PC-3 (cell line): ENCODE measurements at regions of chr1 and their contacts with region 1.

Region 1: GRCh38 chr1:19390901-19391595 is 78.9 kb downstream of the SLC66A1 start:
- DNase-seq: peak; percentile 55
- ATAC-seq: peak; percentile 46; the same call in 1 of the 2 replicates
- H3K4me3 ChIP-seq: no peak overlapping the region
- H3K27ac ChIP-seq: no peak overlapping the region
- H3K4me1 ChIP-seq: peaks cover 4% of the 10 kb centered on the region; the same call in 1 of the 2 replicates
- H3K27me3 ChIP-seq: no peaks in the 10 kb centered on the region
- CTCF ChIP-seq: peak; percentile 91

Region 2: GRCh38 chr1:19361611-19362147 is 29.4 kb before region 1 on chr1:
- CTCF ChIA-PET with region 1: no interaction called
- POLR2A ChIA-PET with region 1: no interaction called
- intact Hi-C with region 1: no loop called
- DNase-seq: peak; percentile 77
- ATAC-seq: peak; percentile 94
- H3K4me3 ChIP-seq: no peak overlapping the region
- H3K27ac ChIP-seq: peak overlapping the region; percentile 18; the same call in 1 of the 2 replicates
- H3K4me1 ChIP-seq: peaks cover 20% of the 10 kb centered on the region
- H3K27me3 ChIP-seq: no peaks in the 10 kb centered on the region
- CTCF ChIP-seq: no peak

Region 3: DNA sequence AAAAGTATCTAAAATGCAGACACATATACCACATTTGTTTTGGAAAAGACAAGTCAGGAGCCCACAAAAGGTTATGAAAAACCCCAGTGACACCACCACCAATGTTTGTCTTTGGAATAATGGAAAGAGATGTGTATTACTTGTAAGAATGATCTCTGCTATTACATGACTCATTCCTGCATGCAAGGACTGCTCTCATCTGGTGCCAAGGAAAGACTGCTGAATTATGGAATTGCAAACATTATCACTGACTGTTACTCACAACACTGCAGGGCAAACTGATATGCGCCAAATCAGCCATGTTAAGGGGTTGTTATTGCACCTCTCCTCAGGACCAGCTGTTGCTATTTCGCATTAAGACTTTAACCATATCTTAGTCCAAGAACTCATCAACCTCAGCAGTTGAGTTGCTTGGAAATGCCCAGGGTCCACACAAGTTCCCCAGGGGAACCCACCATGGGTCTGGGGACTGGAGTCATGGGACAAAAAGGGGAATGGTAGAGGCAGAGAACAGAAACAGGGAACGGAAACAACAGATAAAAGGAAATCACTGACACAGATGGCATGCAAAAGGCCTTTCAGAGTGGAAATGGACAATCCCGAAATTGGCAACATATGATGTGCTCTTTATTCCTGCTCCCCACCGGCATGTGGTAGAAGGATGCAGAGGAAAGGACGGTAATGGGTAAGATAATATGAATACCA is 59.9 kb after region 1 on chr1:
- CTCF ChIA-PET with region 1: no interaction called
- POLR2A ChIA-PET with region 1: no interaction called
- intact Hi-C with region 1: loop called (anchors 10 kb)
- DNase-seq: peak; percentile 94
- ATAC-seq: peak; percentile 89
- H3K4me3 ChIP-seq: peak overlapping the region; percentile 28; the same call in 1 of the 2 replicates
- H3K27ac ChIP-seq: peak overlapping the region; percentile 74
- H3K4me1 ChIP-seq: peaks cover 49% of the 10 kb centered on the region
- H3K27me3 ChIP-seq: no peaks in the 10 kb centered on the region
- CTCF ChIP-seq: no peak

Region 4: DNA sequence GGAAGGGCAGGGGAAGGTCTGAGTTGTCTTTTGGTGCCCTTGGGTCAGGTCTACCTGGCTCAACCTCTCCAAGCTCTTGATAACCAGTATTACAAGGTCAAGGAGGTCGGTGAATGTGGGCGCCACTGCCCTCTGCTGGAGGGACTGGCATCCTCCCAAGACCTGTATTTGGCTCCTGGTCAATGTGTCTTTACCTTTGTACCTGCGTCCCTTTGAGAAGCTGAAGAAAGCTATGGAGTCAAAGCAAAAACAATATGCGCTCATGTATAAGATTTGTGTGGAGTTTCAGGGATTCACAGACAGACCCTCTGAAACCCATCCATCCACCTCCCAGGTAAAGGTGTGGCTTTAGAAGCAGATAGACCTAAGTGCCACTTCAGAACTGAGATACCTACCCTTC is 191.3 kb after region 1 on chr1:
- CTCF ChIA-PET with region 1: no interaction called
- POLR2A ChIA-PET with region 1: no interaction called
- intact Hi-C with region 1: loop called (anchors 10 kb)
- DNase-seq: peak; percentile 60
- ATAC-seq: no peak; the same call in 1 of the 2 replicates
- H3K4me3 ChIP-seq: no peak overlapping the region
- H3K27ac ChIP-seq: no peak overlapping the region
- H3K4me1 ChIP-seq: no peaks in the 10 kb centered on the region
- H3K27me3 ChIP-seq: no peaks in the 10 kb centered on the region
- CTCF ChIP-seq: peak; percentile 82

Region 5: DNA sequence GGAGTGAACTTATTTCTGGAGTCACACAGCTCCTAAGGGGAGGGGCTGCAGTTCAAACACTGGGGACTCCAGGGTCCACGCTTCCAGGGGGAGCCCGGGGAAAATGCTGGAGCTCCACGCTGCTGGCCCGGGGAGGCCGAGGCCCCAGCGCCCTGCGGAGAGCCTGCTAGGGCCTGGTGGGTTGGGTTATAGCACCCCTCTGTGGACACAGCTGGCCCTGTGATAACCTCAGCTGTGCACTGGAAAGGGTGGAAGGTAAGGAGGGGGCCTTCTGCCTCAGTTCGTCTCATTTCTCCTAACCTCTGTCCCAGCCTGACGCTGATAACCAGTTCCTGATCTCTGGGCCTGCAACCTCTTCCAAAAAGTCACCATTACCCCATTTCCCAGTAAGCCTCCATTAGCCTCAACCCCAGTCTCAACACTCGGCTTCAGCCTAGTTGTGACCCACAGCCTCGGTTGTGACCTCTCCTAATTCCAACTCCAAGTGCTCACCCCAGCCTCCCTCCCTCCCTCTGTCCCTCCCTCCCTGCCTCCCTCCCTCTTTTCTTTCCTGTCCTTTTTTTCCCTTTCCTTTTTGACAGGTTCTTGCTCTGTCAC is 260.2 kb after region 1 on chr1:
- CTCF ChIA-PET with region 1: interaction called, 6 read pairs
- POLR2A ChIA-PET with region 1: no interaction called
- intact Hi-C with region 1: loop called (anchors 1 kb)
- DNase-seq: peak; percentile 16
- ATAC-seq: peak; percentile 52
- H3K4me3 ChIP-seq: no peak overlapping the region
- H3K27ac ChIP-seq: no peak overlapping the region
- H3K4me1 ChIP-seq: peaks cover 23% of the 10 kb centered on the region
- H3K27me3 ChIP-seq: no peaks in the 10 kb centered on the region
- CTCF ChIP-seq: peak; percentile 68